ENCODE measurements at regions of chr5 and their contacts with region 1.

Region 1: DNA sequence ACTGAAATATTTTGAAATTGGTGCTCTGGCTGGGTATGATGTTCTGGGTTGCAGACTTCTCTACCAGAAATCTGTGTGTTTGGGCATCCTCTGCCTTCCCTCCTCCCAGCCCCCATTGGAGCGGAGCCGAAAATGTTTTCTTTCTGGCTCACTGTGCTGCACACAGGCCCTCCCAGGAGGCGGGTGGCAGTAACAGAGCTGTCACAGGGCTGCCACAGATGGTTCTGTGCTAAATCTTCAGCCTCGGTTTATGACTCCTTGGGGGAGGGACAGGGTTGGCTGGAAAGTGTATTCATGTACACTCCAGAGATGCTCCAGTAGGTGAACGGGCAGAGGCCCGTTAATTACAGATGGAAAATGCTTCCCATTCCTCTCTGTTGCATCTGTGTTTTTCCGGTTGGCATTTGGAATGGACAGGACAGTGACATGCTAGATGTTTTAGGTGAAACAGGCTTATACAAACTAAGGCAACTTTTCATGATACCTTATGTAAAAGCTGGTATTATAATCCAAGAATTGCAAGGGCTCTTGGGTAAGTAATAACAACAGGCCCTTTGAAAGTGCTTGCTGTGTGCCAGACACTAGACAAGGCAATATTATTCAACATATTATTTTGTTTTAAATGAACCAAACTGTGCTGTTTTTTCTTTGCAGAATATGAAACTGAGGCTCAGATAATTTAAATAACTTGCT is 180.2 kb downstream of the ADCY2 start:
- DNase-seq: no peak
- H3K4me3 ChIP-seq: no peak overlapping the region
- H3K27ac ChIP-seq: no peak overlapping the region
- H3K4me1 ChIP-seq: peaks cover 0 to 10% (median 7%) of the 10 kb centered on the region in 4 donors
- H3K27me3 ChIP-seq: no peaks in the 10 kb centered on the region
- CTCF ChIP-seq: no peak
- EP300 ChIP-seq: no peak
- POLR2A ChIP-seq: no peak

Region 2: GRCh38 chr5:7405277-7405676 is 170.9 kb before region 1 on chr5:
- intact Hi-C with region 1: loop called (anchors 10 kb)
- DNase-seq: no peak
- H3K4me3 ChIP-seq: no peak overlapping the region
- H3K27ac ChIP-seq: no peak overlapping the region
- H3K4me1 ChIP-seq: no peaks in the 10 kb centered on the region
- H3K27me3 ChIP-seq: no peaks in the 10 kb centered on the region
- CTCF ChIP-seq: no peak
- EP300 ChIP-seq: no peak
- POLR2A ChIP-seq: no peak

Region 3: DNA sequence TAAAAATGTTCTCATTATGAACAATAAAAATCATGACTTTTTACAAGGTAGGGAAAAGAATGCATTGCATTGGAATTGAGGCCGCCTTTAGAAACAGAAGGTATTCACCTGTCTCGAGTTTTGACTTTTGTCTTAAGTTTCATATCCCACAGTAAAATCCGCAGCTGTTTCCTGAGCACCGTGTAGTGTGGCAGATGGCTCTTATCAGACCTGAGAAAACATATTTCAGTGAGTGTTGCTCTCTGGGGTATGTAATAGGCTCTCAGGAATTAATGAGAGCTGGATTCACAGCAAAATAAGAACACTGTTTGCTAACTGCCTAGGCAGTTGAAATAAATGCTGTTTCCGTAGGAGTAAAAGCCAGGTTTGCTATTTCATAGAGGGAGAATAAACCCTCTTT is 53.4 kb after region 1 on chr5:
- intact Hi-C with region 1: no loop called
- DNase-seq: no peak
- H3K4me3 ChIP-seq: no peak overlapping the region
- H3K27ac ChIP-seq: no peak overlapping the region
- H3K4me1 ChIP-seq: no peaks in the 10 kb centered on the region
- H3K27me3 ChIP-seq: no peaks in the 10 kb centered on the region
- CTCF ChIP-seq: no peak
- EP300 ChIP-seq: no peak
- POLR2A ChIP-seq: no peak